ENCODE measurements at regions of chr2 and their contacts with region 1.

Region 1: GRCh38 chr2:177618255-177619253 is 226.0 kb downstream of the AGPS start:
- DNase-seq: peak; percentile 89
- H3K4me3 ChIP-seq: peak overlapping the region; percentile 89
- H3K27ac ChIP-seq: peak overlapping the region; percentile 65
- H3K4me1 ChIP-seq: peaks cover 4% of the 10 kb centered on the region
- CTCF ChIP-seq: no peak

Region 2: DNA sequence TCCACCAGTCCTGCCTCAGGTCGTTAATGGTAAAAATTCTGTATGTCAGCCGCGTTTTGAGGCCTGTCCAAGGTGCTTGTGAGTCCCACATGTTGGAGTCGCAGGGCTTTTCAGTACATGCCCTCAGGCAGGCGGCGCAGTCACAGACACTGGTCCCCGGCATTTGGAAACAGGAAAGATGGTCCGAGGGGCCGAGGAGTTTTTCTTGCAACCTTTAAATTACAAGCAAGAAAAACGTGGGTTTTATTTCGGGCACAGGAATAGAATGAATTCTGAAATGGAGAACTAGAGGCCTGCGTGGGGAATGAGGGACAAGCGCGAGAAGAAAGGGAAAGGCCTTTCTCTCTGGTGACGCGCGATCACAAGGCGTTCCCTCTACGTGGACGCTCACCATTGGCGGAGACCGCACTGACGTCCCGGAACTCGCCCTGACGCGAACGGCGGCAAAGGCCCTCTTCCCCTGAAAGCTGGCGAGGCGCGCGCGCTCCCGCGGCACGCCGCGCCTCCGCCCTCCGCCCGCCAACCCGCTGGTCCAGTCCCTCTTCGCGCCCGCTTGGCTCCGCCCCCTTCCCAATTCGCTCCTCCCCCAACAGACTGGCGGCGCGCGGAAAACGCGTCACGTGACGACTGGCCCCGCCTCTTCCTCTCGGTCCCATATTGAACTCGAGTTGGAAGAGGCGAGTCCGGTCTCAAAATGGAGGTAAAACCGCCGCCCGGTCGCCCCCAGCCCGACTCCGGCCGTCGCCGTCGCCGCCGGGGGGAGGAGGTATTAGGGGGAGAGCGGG is 406.3 kb before region 1 on chr2 and contains the start of gene HNRNPA3:
- CTCF ChIA-PET with region 1: no interaction called
- POLR2A ChIA-PET with region 1: no interaction called
- intact Hi-C with region 1: loop called (anchors 5 kb)
- DNase-seq: peak; percentile 98
- H3K4me3 ChIP-seq: peak within 1 kb of the TSS; percentile 81
- H3K27ac ChIP-seq: peak within 1 kb of the TSS; percentile 87
- H3K4me1 ChIP-seq: peaks cover 35% of the 10 kb centered on the region
- CTCF ChIP-seq: peak; percentile 47; the same call in 1 of the 2 replicates
- total RNA-seq, gene HNRNPA3: 68.2 and 82.2 TPM in 2 replicates

Region 3: DNA sequence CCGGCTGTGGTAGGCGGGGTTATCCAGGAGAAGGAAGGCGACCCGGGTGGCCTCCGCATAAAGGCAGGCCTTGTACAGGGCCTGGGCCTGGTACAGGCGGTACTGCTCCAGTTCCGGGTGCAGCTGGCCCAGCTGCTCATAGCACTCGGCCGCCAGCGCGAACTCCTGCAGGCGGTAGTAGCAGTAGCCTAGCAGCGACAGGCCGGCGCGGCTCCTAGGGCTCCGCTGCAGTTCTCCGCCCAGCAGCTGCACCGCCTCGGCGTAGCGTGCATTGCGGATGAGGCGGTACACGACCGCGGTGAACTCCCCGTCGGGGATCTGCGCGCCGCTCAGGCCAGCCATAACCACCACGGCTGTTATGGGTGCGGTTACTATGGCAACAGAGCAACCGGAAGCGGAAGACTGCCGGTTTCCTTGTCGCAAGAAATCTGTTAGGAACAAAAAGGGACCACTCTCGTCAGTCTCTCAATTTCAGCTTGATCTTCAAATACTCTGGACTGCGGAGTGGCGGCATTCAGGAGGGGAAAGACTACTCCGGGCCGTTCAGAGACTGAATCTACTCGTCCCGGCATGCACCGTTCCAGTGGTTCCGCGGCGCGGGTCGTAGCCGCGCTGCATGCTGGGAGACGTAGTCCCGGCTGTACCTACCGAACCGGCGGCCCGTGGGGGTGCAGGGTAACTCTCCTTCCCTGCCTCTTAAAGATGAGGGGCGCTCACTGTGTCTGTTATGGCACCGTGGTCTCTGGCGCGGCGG is 66.0 kb before region 1 on chr2:
- CTCF ChIA-PET with region 1: no interaction called
- POLR2A ChIA-PET with region 1: interaction called, 3 read pairs
- intact Hi-C with region 1: loop called (anchors 5 kb)
- DNase-seq: peak; percentile 93
- H3K4me3 ChIP-seq: peak overlapping the region; percentile 75
- H3K27ac ChIP-seq: peak overlapping the region; percentile 69
- H3K4me1 ChIP-seq: peaks cover 9% of the 10 kb centered on the region
- CTCF ChIP-seq: no peak

Region 4: DNA sequence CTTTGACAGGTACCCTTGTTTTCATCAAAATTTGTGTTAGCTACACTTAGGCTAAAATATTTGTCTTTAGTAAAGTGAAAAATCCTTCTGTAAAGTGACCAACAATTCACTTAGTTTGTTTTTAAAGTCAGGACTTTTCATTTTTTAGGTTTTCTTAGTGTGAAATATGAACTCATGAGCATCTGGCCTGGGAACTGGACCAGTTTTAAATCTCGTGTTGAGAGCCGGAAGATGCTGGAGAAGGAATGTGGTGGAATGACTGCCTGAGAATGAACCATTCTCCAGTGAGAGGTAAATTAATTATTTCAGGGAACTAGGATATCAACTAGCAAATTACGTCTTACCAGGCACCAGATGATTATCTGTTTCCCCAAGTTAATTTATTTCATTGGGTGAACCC is 79.7 kb after region 1 on chr2:
- CTCF ChIA-PET with region 1: no interaction called
- POLR2A ChIA-PET with region 1: no interaction called
- intact Hi-C with region 1: no loop called
- DNase-seq: no peak
- H3K4me3 ChIP-seq: no peak overlapping the region
- H3K27ac ChIP-seq: no peak overlapping the region
- H3K4me1 ChIP-seq: no peaks in the 10 kb centered on the region
- CTCF ChIP-seq: no peak